B cell (primary cell): ENCODE measurements at regions of chr16 and their contacts with region 1.

Region 1: GRCh38 chr16:68085259-68086071 is at the start of gene NFATC3:
- DNase-seq: peak; percentile 99
- ATAC-seq: peak; percentile 76
- H3K4me3 ChIP-seq: peak within 1 kb of the TSS; percentile 90 to 97 (median 94)
- H3K4me3 Mint-ChIP-seq: peak within 1 kb of the TSS; percentile 86
- H3K27ac ChIP-seq: peak within 1 kb of the TSS; percentile 81 to 93
- H3K27ac Mint-ChIP-seq: peak within 1 kb of the TSS; percentile 96
- H3K4me1 ChIP-seq: peaks cover 57 to 73% of the 10 kb centered on the region in 2 donors
- H3K4me1 Mint-ChIP-seq: peaks cover 68% of the 10 kb centered on the region
- H3K27me3 ChIP-seq: no peaks in the 10 kb centered on the region
- H3K27me3 Mint-ChIP-seq: no peaks in the 10 kb centered on the region
- CTCF ChIP-seq: no peak
- total RNA-seq, gene NFATC3: 115 TPM in 2 replicates

Region 2: DNA sequence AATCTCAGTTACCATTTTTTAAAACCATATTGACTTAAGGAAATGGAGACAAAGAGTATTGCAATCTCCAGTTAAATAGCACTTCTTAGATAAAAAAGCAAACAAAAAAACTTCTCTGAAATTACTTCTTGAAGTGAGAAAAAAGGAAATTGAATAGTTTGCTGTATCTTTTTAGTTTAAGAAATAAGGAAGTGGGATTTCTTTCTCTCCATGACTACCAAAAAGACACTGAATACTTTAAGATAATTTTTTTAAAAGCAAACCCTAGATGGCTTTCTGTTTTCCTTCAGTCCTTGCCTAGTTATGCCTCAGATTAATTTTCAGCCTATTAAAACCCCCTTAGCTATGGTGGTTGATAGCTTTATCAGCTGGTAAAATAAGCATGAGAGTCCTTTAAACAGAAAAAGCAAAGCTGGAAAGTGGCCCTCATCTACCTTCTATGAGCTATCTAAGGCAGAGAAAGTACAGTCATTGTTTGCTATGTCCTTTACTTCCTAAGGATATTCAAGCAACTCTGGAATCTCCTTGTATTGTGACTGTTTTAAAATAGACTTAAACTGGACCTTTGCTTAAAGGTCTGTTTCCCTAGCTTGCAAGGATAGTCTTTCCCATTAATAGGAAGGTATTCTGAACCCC is 720.7 kb before region 1 on chr16:
- CTCF ChIA-PET with region 1: no interaction called
- POLR2A ChIA-PET with region 1: no interaction called
- intact Hi-C with region 1: no loop called
- DNase-seq: peak; percentile 27
- ATAC-seq: peak; percentile 36
- H3K4me3 ChIP-seq: peak overlapping the region in 1 of 5 experiments; percentile 16
- H3K4me3 Mint-ChIP-seq: peak overlapping the region; percentile 49
- H3K27ac ChIP-seq: peak overlapping the region; percentile 55 to 79
- H3K27ac Mint-ChIP-seq: peak overlapping the region; percentile 81
- H3K4me1 ChIP-seq: peaks cover 15 to 21% of the 10 kb centered on the region in 2 donors
- H3K4me1 Mint-ChIP-seq: peaks cover 17% of the 10 kb centered on the region
- H3K27me3 ChIP-seq: peaks cover 0 to under 1% (median 0%) of the 10 kb centered on the region in 4 experiments
- H3K27me3 Mint-ChIP-seq: no peaks in the 10 kb centered on the region
- CTCF ChIP-seq: no peak

Region 3: DNA sequence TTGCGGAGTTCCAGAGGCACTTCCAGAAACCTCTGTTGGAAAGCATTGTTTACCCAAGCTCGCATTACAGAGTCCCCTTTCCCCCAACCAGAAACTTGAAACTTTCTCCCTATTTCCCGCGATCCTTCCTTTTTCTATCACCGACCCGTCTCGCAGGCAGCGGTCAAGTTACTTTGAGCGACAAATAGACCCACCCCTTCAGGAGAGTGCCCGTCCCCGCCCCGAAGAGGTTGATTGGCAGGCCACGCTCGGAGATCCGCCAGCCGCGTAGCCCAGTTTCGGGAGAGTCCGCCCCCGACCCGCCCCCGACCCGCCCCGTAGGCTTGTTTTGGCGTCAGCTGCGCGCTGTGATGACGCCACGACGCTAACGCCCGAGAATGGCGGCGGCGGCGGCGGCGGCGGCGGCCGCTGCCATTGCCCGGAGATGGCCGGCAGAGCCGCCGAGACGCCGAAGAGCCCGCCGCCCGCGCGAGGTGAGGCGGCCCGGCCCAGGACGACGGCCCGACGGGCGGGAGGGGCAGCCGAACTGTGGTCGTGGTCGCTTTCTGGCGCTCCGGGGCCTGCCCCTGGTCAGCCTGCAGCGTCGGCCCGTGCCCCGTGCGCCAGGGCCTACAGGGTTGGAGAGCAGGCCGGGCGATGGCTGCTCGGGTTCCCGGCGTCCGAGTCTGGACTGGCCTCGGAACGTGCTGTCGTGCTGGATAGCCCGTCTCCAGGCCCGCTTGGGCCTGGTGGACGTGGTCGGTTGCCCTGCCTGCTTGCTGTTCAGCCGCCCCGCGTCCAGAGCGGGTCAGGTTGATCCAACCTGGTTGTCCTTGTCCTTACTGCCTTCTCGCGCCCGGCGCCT is 192.3 kb before region 1 on chr16 and contains the start of gene PSKH1:
- CTCF ChIA-PET with region 1: no interaction called
- POLR2A ChIA-PET with region 1: no interaction called
- intact Hi-C with region 1: loop called (anchors 1 kb)
- DNase-seq: peak; percentile 95
- ATAC-seq: peak; percentile 99
- H3K4me3 ChIP-seq: peak within 1 kb of the TSS; percentile 61 to 92 (median 76)
- H3K4me3 Mint-ChIP-seq: peak within 1 kb of the TSS; percentile 90
- H3K27ac ChIP-seq: peak within 1 kb of the TSS; percentile 77 to 95
- H3K27ac Mint-ChIP-seq: peak within 1 kb of the TSS; percentile 85
- H3K4me1 ChIP-seq: peaks cover 16 to 18% of the 10 kb centered on the region in 2 donors
- H3K4me1 Mint-ChIP-seq: peaks cover 31% of the 10 kb centered on the region
- H3K27me3 ChIP-seq: no peaks in the 10 kb centered on the region
- H3K27me3 Mint-ChIP-seq: no peaks in the 10 kb centered on the region
- CTCF ChIP-seq: no peak
- total RNA-seq, gene PSKH1: 29.1 TPM in 2 replicates

Region 4: GRCh38 chr16:68064791-68065365 is 20.6 kb before region 1 on chr16:
- CTCF ChIA-PET with region 1: interaction called, 242 read pairs
- POLR2A ChIA-PET with region 1: interaction called, 52 read pairs
- intact Hi-C with region 1: loop called (anchors 2 kb)
- DNase-seq: peak; percentile 74
- ATAC-seq: peak; percentile 93
- H3K4me3 ChIP-seq: no peak overlapping the region
- H3K4me3 Mint-ChIP-seq: no peak overlapping the region
- H3K27ac ChIP-seq: no peak overlapping the region
- H3K27ac Mint-ChIP-seq: peak overlapping the region; percentile 33
- H3K4me1 ChIP-seq: peaks cover 9 to 22% of the 10 kb centered on the region in 2 donors
- H3K4me1 Mint-ChIP-seq: peaks cover 23% of the 10 kb centered on the region
- H3K27me3 ChIP-seq: no peaks in the 10 kb centered on the region
- H3K27me3 Mint-ChIP-seq: no peaks in the 10 kb centered on the region
- CTCF ChIP-seq: peak; percentile 90

Region 5: DNA sequence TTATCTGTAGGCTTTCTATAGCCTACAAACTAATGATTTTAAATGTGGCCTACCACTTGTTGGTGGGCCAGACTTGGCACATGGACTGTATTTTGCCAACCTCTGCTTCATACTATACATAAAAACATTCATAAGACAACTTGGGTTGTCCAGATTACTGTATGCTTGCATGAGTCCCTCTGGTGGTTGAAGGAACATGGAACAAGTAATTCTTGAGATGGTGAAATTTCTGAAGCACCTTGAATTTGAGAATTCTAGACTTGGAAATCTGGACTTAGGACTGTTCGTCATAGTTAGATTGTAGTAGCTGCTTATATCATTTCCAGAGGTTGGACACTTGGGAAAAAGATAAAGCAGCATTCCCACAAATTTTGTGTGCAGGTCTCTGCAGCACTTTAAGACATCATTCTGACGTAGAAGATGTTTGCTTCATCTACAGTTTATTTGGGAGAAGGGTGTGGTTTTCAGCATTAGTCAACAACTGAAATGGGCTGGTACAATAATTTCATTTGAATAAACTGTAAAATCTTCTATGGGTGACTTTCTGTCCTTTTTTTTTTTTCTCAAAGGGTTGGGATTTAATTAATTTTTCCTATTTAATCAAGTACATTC is 30.9 kb after region 1 on chr16:
- CTCF ChIA-PET with region 1: interaction called, 10 read pairs
- POLR2A ChIA-PET with region 1: interaction called, 5 read pairs
- intact Hi-C with region 1: no loop called
- DNase-seq: peak; percentile 54
- ATAC-seq: peak; percentile 31
- H3K4me3 ChIP-seq: no peak overlapping the region
- H3K4me3 Mint-ChIP-seq: no peak overlapping the region
- H3K27ac ChIP-seq: peak overlapping the region in 1 of 2 donors; percentile 73
- H3K27ac Mint-ChIP-seq: peak overlapping the region; percentile 67
- H3K4me1 ChIP-seq: peaks cover 64 to 73% of the 10 kb centered on the region in 2 donors
- H3K4me1 Mint-ChIP-seq: peaks cover 74% of the 10 kb centered on the region
- H3K27me3 ChIP-seq: no peaks in the 10 kb centered on the region
- H3K27me3 Mint-ChIP-seq: no peaks in the 10 kb centered on the region
- CTCF ChIP-seq: peak; percentile 77

Region 6: GRCh38 chr16:68229431-68230198 is 144.2 kb after region 1 on chr16:
- CTCF ChIA-PET with region 1: interaction called, 22 read pairs
- POLR2A ChIA-PET with region 1: no interaction called
- intact Hi-C with region 1: no loop called
- DNase-seq: peak; percentile 70
- ATAC-seq: peak; percentile 53
- H3K4me3 ChIP-seq: no peak overlapping the region
- H3K4me3 Mint-ChIP-seq: no peak overlapping the region
- H3K27ac ChIP-seq: no peak overlapping the region
- H3K27ac Mint-ChIP-seq: peak overlapping the region; percentile 82
- H3K4me1 ChIP-seq: peaks cover 27 to 28% of the 10 kb centered on the region in 2 donors
- H3K4me1 Mint-ChIP-seq: peaks cover 46% of the 10 kb centered on the region
- H3K27me3 ChIP-seq: no peaks in the 10 kb centered on the region
- H3K27me3 Mint-ChIP-seq: no peaks in the 10 kb centered on the region
- CTCF ChIP-seq: peak; percentile 96

Region 7: DNA sequence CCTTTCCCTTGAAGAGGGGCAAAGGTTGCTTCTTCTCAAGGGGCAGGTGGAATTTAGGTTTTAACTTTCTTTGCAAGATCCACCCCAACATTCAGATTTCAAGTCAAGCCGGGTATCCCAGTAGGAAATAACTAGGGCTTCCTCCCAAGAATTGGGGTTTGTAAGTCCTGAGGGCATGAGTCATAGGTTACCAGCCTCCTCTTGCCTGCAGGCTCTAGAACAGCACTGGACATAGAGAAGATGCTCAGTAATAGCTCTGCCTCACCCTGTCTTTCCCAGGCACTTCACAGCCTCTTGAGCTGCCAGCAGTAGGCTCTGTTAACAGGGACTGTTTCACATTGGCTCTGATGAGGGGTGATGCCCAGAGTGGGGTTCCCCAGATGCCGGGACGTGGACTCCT is 417.9 kb after region 1 on chr16:
- CTCF ChIA-PET with region 1: no interaction called
- POLR2A ChIA-PET with region 1: no interaction called
- intact Hi-C with region 1: no loop called
- DNase-seq: no peak
- ATAC-seq: no peak
- H3K4me3 ChIP-seq: no peak overlapping the region
- H3K4me3 Mint-ChIP-seq: no peak overlapping the region
- H3K27ac ChIP-seq: no peak overlapping the region
- H3K27ac Mint-ChIP-seq: no peak overlapping the region
- H3K4me1 ChIP-seq: no peaks in the 10 kb centered on the region
- H3K4me1 Mint-ChIP-seq: no peaks in the 10 kb centered on the region
- H3K27me3 ChIP-seq: no peaks in the 10 kb centered on the region
- H3K27me3 Mint-ChIP-seq: no peaks in the 10 kb centered on the region
- CTCF ChIP-seq: no peak